Left ventricle myocardium inferior (tissue), 1 donor: ENCODE measurements at regions of chr5 and their contacts with region 1.

Region 1: DNA sequence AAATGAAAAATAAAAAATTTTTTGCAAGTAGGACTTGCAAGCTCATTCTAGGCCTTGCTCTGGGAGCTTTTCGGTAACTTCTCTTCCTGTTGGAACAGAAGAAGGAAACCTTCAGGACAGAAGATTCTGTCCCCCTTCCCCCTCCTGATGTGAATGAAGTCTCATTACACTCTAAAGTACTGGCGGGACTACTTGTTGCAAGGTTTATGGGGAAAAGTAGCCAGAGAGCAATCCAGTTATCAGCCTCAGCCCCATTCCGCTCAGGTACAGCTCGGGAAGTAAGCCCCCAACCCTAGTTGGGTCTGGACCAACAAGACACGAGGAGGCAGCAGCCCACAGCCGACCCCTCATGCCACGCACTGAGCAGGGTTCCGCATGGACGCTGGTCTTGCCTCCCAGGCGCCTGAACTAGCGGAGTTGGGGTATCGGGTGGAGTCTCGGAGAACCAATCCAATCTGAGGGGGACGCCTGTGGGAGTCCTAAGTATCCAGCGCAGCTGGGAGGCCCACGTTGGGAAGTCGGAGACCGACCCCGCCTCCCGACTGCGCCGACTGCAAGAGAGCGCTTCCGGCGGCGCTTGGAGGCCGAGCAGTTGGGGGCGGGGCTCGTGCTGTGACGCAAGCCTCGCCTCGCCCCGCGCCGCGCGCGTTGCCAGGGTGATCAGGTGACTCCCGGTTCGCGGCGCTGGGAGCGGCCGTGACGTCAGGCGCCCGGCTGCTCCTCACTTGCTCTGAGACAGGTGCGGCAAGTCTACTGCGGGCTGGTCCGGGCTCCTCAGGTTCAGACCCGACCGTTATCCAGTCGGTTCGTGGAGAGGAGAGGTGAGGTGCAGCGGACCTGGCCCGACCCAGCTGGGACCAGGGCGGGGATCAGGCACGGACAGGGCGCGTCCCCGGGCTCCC is at the start of gene CYSTM1:
- DNase-seq: peak; percentile 97
- H3K4me3 ChIP-seq: peak within 1 kb of the TSS; percentile 89
- H3K27ac ChIP-seq: peak within 1 kb of the TSS; percentile 95
- H3K4me1 ChIP-seq: peaks cover 49% of the 10 kb centered on the region
- H3K27me3 ChIP-seq: no peaks in the 10 kb centered on the region
- CTCF ChIP-seq: no peak
- total RNA-seq, gene CYSTM1: 93.3 TPM

Region 2: DNA sequence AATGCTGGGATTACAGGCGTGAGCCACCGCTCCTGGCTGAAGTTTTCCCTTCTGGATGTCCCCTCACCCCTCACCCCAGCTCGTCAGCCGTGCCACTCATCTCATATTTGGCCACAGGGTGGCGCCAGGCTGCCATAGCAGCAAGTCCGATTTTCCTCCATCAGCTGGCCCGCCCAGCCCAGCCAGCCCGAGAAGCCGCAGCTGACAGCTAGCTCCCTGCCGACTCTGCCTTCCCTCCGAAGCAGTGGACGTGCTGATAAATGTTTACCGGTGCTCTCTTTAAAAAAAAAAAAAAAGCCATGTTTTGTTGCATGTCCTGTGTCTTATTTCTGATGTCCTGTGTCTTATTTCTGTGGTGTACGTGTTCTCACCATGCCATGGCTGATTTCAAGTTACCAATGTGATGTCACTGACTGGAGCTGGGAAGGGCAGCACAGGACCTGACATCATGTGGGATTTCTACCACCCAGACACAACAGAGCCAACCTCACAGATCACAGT is 69.9 kb after region 1 on chr5:
- intact Hi-C with region 1: loop called (anchors 10 kb)
- DNase-seq: peak; percentile 91
- H3K4me3 ChIP-seq: peak overlapping the region; percentile 12
- H3K27ac ChIP-seq: peak overlapping the region; percentile 92
- H3K4me1 ChIP-seq: peaks cover 95% of the 10 kb centered on the region
- H3K27me3 ChIP-seq: no peaks in the 10 kb centered on the region
- CTCF ChIP-seq: peak; percentile 93

Region 3: DNA sequence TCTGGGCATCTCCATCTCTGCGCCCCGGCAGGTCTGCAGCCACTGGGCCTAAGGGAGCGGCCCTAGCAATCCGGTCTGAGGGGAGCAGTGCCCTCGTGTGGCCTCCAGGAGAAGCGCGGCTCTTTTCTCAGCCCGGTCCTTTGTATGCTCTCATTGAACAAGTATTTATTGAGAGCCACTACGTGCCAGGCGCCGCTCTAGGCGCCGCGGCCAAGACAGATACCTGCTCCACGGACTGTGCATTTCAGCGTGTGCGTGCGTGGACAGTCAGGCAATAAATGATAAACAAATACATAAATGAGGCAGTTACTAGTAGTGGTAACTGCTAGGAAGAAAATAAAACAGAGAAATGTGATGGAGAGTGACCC is 183.0 kb after region 1 on chr5:
- intact Hi-C with region 1: loop called (anchors 10 kb)
- DNase-seq: peak; percentile 81
- H3K4me3 ChIP-seq: peak overlapping the region; percentile 40
- H3K27ac ChIP-seq: no peak overlapping the region
- H3K4me1 ChIP-seq: peaks cover 10% of the 10 kb centered on the region
- H3K27me3 ChIP-seq: no peaks in the 10 kb centered on the region
- CTCF ChIP-seq: peak; percentile 95